Heart right ventricle (tissue), 16 donors: ENCODE measurements at regions of chr6 and their contacts with region 1.

Region 1: GRCh38 chr6:51613554-51613953 is 473.9 kb downstream of the PKHD1 start:
- DNase-seq: no peak
- ATAC-seq: no peak
- H3K4me3 ChIP-seq: no peak overlapping the region
- H3K27ac ChIP-seq: no peak overlapping the region
- H3K4me1 ChIP-seq: no peaks in the 10 kb centered on the region
- H3K27me3 ChIP-seq: no peaks in the 10 kb centered on the region
- CTCF ChIP-seq: no peak

Region 2: DNA sequence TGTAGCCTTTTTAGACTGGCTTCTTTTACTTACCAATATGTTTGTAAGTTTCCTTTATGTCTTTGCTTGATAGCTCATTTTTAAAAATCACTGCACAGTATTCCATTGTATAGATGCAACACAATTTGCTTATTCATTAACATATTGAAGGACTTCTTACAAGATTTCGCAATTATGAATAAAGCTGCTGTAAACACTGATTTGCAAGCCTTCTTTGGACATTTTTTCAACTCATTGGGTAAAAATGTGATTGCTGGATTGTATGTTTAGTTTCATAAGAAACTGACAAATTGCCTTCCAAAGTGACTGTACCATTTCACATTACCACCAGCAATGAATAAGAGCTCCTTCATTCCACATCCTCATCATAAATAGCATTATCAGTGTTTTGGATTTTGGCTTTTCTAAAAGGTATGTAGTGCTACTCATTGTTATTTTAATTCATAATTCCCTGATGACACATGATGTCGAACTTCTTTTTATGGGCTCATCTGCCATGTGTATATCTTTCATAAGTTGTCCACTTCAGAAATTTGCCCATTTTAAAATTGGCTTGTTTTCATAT is 714.2 kb before region 1 on chr6:
- intact Hi-C with region 1: no loop called
- DNase-seq: no peak
- ATAC-seq: no peak
- H3K4me3 ChIP-seq: no peak overlapping the region
- H3K27ac ChIP-seq: no peak overlapping the region
- H3K4me1 ChIP-seq: no peaks in the 10 kb centered on the region
- H3K27me3 ChIP-seq: no peaks in the 10 kb centered on the region
- CTCF ChIP-seq: no peak

Region 3: GRCh38 chr6:51562198-51562597 is 51.4 kb before region 1 on chr6:
- intact Hi-C with region 1: no loop called
- DNase-seq: no peak
- ATAC-seq: no peak
- H3K4me3 ChIP-seq: no peak overlapping the region
- H3K27ac ChIP-seq: no peak overlapping the region
- H3K4me1 ChIP-seq: no peaks in the 10 kb centered on the region
- H3K27me3 ChIP-seq: peaks cover 0 to 4% (median 0%) of the 10 kb centered on the region in 7 donors
- CTCF ChIP-seq: no peak

Region 4: DNA sequence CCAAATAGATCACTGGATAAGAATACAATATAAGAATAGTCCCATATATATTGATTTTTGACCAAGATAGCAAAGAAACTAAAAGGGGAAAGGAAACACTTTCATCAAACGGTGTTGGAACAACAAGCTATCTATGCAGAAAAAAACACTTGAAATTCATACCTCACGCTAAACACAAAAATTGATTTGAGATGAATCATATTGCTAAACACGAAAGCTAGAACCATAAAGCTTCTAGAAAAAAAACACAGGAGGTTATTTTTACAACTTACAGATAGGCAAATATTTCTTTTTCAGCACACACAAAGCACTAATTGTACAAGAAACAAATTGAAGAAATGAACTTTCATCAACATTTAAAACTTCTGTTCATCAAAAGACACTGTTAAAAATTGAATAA is 1020.7 kb after region 1 on chr6:
- intact Hi-C with region 1: loop called in 1 of 10 experiments (anchors 5 kb)
- DNase-seq: no peak
- ATAC-seq: no peak
- H3K4me3 ChIP-seq: no peak overlapping the region
- H3K27ac ChIP-seq: no peak overlapping the region
- H3K4me1 ChIP-seq: no peaks in the 10 kb centered on the region
- H3K27me3 ChIP-seq: peaks cover 0 to under 1% (median 0%) of the 10 kb centered on the region in 7 donors
- CTCF ChIP-seq: no peak